ENCODE measurements at regions of chr1 and their contacts with region 1.

Region 1: DNA sequence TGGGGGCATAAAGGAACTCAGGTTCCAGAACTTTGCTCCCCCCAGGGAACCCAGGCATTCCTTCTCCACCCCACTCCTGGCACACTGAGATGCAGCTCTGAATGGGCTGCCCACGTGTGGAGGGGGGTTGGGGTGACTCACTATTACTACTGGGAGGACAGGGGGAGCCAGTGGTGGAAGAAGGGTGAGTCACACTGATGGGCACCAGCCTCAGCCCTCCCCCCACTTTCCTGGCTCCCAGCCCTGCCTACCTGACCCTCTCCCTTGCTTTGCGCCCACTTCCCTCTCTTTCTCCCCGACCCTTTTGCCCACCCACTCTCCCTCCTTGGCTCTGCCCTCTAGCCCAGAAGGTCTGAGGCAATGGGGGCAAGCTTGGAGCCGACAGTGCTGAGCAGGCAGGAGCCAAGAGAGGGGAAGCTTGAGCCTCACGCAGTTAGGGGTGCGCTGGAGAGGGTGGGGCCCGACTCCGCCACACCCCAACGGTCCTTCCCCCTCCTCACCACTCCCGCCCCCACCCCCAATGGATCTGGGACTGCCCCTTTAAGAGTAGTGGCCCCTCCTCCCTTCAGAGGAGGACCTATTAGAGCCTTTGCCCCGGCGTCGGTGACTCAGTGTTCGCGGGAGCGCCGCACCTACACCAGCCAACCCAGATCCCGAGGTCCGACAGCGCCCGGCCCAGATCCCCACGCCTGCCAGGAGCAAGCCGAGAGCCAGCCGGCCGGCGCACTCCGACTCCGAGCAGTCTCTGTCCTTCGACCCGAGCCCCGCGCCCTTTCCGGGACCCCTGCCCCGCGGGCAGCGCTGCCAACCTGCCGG is at the start of gene LMNA:
- DNase-seq: peak; percentile 91 to 97 (median 96)
- H3K4me3 ChIP-seq: peak within 1 kb of the TSS; percentile 69 to 95 (median 90)
- H3K27ac ChIP-seq: peak within 1 kb of the TSS in 1 of 2 experiments; percentile 86
- H3K4me1 ChIP-seq: peaks cover 0 to 48% (median 37%) of the 10 kb centered on the region in 4 experiments
- H3K27me3 ChIP-seq: peaks cover 0 to 54% (median 23%) of the 10 kb centered on the region in 5 experiments

Region 2: GRCh38 chr1:156075162-156075561 is 39.1 kb before region 1 on chr1:
- CTCF ChIA-PET with region 1: no interaction called
- POLR2A ChIA-PET with region 1: no interaction called
- DNase-seq: no peak
- H3K4me3 ChIP-seq: no peak overlapping the region
- H3K27ac ChIP-seq: no peak overlapping the region
- H3K4me1 ChIP-seq: peaks cover 0 to 23% (median 18%) of the 10 kb centered on the region in 4 experiments
- H3K27me3 ChIP-seq: no peaks in the 10 kb centered on the region

Region 3: DNA sequence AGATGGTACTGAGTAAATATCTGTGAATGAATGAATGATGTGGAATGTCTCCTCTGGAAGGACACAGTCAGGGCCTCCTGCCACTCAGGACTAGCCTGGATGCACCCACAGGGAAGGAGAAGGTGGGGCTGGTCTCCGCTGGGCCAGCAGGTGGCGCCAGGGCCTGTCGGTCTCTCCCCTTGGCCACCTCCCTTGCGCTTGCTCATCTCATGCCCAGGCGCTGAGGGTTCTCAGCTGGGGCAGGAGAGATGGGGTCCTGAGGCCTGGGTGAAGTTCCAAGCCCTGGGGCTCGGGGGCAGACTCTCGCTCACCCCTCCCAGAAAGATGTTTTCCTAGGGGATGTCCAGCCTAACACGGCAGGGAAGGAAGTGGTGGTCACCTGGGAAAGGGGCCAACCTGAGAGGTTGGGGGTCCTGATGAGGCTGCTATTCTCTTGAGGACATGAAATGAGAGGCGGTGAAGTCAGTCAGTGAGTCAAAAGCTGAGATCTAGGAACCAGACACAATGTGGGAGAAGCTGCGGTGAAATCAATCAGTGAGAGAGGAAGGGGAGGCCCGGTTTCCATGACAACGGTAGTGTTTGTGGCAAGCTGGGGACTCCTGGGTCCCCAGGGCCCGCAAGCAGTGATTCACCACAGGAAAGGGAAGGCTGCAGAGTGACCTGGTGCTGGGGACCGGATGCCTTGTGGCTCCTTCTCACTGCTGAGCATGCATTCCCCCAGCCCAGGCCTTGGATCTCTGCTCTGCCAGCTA is 17.5 kb before region 1 on chr1:
- CTCF ChIA-PET with region 1: interaction called, 1,191 read pairs
- POLR2A ChIA-PET with region 1: interaction called, 9 read pairs
- DNase-seq: peak; percentile 98 to 99 (median 99)
- H3K4me3 ChIP-seq: peak overlapping the region in 2 of 7 experiments; percentile 6 to 16
- H3K27ac ChIP-seq: peak overlapping the region in 1 of 2 experiments; percentile 52
- H3K4me1 ChIP-seq: peaks cover 0 to 29% (median 25%) of the 10 kb centered on the region in 4 experiments
- H3K27me3 ChIP-seq: peaks cover 0 to 16% (median 10%) of the 10 kb centered on the region in 5 experiments

Region 4: DNA sequence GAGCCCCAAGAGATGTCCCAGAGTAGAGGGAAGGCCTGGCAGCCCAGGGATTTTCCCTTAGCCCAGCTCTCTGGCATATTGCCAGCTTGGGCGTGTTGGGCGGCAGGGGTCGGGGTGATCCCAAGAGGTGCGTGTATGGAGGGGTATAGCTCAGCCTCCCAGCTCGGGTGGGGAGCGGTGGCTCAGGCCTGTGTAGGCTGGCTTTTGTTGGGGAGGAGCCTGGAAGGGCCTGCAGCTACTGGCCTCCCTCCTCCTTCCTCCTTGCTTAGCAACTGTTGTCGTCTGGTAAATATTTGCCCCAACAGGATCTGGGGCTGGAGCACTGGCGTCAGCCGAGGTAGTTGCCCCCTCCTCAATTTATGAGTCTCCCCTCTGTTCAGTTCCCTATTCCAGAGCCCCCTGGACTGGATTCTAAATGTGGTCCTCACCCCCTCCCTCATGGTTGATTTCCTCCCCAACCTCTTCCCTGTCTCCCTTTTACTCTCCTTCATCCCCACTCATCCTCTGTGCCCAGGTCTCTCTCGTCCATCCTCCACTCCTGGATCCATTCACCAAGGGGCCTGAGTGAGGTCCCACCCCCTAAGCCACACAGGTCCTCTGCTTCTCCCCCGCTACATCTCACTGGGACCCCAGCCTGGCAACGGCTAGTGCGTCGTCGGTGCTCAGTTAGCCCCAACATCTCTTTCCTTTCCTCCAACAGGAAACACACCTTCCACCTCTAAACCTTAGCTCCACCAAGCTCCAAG is 10.1 kb before region 1 on chr1:
- CTCF ChIA-PET with region 1: interaction called, 1,191 read pairs
- POLR2A ChIA-PET with region 1: interaction called, 27 read pairs
- DNase-seq: peak; percentile 91 to 96 (median 96)
- H3K4me3 ChIP-seq: peak overlapping the region in 3 of 7 experiments; percentile 20 to 64 (median 47)
- H3K27ac ChIP-seq: peak overlapping the region; percentile 48 to 92
- H3K4me1 ChIP-seq: peaks cover 7 to 55% (median 51%) of the 10 kb centered on the region in 4 experiments
- H3K27me3 ChIP-seq: peaks cover 0 to 14% (median 10%) of the 10 kb centered on the region in 5 experiments

Region 5: DNA sequence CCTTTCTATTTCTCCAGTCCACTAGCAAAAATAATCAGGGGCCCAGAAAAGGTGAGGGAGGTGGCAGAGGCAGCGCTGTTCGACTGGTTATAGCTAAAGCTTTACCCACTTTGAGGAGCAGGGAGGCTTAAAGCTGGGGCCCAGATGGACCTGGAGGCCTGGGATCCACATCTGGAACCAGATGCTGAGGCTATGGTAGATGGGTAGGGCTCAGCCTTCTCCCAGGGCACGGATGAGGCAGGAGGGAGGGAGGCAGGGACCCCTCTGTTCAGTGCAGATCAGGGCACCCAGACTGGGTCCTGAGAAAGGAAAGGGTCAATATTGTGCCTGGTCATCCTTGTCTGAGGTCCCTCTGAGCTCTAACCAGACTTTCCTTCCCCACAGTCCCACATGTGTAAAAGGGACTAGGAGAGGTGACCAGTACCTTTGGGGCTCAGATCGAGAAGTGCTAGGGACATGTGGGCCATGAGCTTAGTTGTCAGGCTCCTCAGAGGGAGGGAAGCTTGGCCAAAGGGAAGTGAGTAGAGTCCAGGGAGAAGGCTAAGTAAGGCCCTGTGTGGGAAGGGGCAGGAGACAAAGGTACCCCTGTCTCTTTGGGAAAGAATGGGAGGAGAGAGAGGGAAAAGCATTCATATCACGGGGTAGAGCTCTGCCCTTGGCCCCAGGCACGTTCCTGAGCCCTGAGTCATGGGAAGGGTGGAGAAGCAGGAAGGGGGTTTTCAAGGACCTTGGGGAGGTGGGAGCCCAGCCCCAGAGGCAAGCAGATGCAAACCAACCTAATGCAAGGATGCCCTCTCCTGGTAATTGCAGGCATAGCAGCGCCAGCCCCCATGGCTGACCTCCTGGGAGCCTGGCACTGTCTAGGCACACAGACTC is 15.6 kb after region 1 on chr1:
- CTCF ChIA-PET with region 1: interaction called, 1,191 read pairs
- POLR2A ChIA-PET with region 1: interaction called, 13 read pairs
- DNase-seq: peak in 2 of 3 donors; percentile 67 to 73
- H3K4me3 ChIP-seq: no peak overlapping the region
- H3K27ac ChIP-seq: no peak overlapping the region
- H3K4me1 ChIP-seq: peaks cover 5 to 53% (median 48%) of the 10 kb centered on the region in 4 experiments
- H3K27me3 ChIP-seq: no peaks in the 10 kb centered on the region

Region 6: DNA sequence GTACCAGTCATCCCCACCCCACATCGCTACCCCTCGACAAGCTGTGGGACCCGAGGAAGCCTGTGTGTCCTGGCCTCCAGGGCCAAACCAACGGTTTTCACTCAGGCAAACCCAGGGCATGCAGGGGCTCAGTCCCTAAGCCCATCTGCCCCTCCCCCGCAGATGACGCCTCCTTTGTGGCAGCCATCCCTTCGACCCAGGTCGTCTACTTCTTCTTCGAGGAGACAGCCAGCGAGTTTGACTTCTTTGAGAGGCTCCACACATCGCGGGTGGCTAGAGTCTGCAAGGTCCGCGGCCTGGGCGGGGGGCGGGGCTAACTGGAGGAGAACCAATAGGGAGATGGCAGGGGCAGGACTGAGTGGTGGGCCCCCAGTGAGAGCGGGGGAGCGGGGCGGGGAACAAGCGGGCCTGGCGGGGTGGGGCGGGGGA is 46.4 kb after region 1 on chr1:
- CTCF ChIA-PET with region 1: no interaction called
- POLR2A ChIA-PET with region 1: no interaction called
- DNase-seq: peak; percentile 71 to 86 (median 81)
- H3K4me3 ChIP-seq: peak overlapping the region in 5 of 7 experiments; percentile 26 to 62 (median 40)
- H3K27ac ChIP-seq: peak overlapping the region in 1 of 2 experiments; percentile 43
- H3K4me1 ChIP-seq: peaks cover 3 to 23% (median 21%) of the 10 kb centered on the region in 4 experiments
- H3K27me3 ChIP-seq: no peaks in the 10 kb centered on the region